Activated CD4-positive, alpha-beta memory T cell treated with anti-CD3 and anti-CD28 coated beads for 36 hours (primary cell): ENCODE measurements at regions of chr7 and their contacts with region 1.

Region 1: GRCh38 chr7:76262683-76263402 is 39.6 kb upstream of the HSPB1 start:
- DNase-seq: peak; percentile 54
- H3K4me3 Mint-ChIP-seq: no peak overlapping the region
- H3K27ac Mint-ChIP-seq: no peak overlapping the region
- H3K4me1 Mint-ChIP-seq: peaks cover under 1% of the 10 kb centered on the region
- H3K27me3 Mint-ChIP-seq: peaks cover 24% of the 10 kb centered on the region

Region 2: GRCh38 chr7:76166404-76167255 is 96.2 kb before region 1 on chr7:
- CTCF ChIA-PET with region 1: interaction called, 3 read pairs
- POLR2A ChIA-PET with region 1: no interaction called
- intact Hi-C with region 1: loop called (anchors 2 kb)
- DNase-seq: peak; percentile 95
- H3K4me3 Mint-ChIP-seq: peak overlapping the region; percentile 82
- H3K27ac Mint-ChIP-seq: peak overlapping the region; percentile 73
- H3K4me1 Mint-ChIP-seq: peaks cover 6% of the 10 kb centered on the region
- H3K27me3 Mint-ChIP-seq: no peaks in the 10 kb centered on the region

Region 3: DNA sequence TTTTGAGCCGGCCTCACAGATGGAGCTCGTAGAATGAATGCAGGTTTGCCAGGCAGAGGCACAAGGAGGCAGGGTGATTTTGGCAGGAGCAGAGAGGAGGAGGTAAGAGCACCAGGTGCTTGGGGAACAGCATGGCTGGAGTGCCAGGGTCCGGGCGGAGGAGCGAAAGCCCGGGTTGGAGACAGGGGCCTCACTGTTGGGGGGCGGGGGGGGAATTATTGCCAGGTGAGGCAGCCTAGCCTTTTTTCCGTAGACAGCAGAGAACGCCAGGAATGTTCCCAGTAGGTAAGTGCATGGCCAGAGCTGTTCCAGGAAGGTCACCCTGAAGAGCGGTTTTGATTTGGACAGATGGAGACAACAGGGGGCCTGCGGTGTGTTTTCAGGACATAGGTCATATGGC is 51.6 kb before region 1 on chr7:
- CTCF ChIA-PET with region 1: no interaction called
- POLR2A ChIA-PET with region 1: no interaction called
- intact Hi-C with region 1: no loop called
- DNase-seq: no peak
- H3K4me3 Mint-ChIP-seq: no peak overlapping the region
- H3K27ac Mint-ChIP-seq: no peak overlapping the region
- H3K4me1 Mint-ChIP-seq: no peaks in the 10 kb centered on the region
- H3K27me3 Mint-ChIP-seq: peaks cover 7% of the 10 kb centered on the region

Region 4: GRCh38 chr7:76234931-76235441 is 27.9 kb before region 1 on chr7:
- CTCF ChIA-PET with region 1: interaction called, 12 read pairs
- POLR2A ChIA-PET with region 1: no interaction called
- intact Hi-C with region 1: loop called (anchors 1 kb)
- DNase-seq: peak; percentile 90
- H3K4me3 Mint-ChIP-seq: peak overlapping the region; percentile 39
- H3K27ac Mint-ChIP-seq: no peak overlapping the region
- H3K4me1 Mint-ChIP-seq: peaks cover 5% of the 10 kb centered on the region
- H3K27me3 Mint-ChIP-seq: peaks cover 49% of the 10 kb centered on the region

Region 5: GRCh38 chr7:76272851-76273497 is 10.1 kb after region 1 on chr7:
- CTCF ChIA-PET with region 1: interaction called, 14 read pairs
- POLR2A ChIA-PET with region 1: no interaction called
- intact Hi-C with region 1: no loop called
- DNase-seq: no peak
- H3K4me3 Mint-ChIP-seq: no peak overlapping the region
- H3K27ac Mint-ChIP-seq: no peak overlapping the region
- H3K4me1 Mint-ChIP-seq: peaks cover 12% of the 10 kb centered on the region
- H3K27me3 Mint-ChIP-seq: peaks cover 33% of the 10 kb centered on the region